MCF 10A (cell line): ENCODE measurements at regions of chr6 and their contacts with region 1.

Region 1: GRCh38 chr6:37018198-37019064 is 13.0 kb downstream of the FGD2 start:
- DNase-seq: peak; percentile 87
- H3K4me3 Mint-ChIP-seq: no peak overlapping the region
- H3K27ac Mint-ChIP-seq: no peak overlapping the region
- H3K4me1 Mint-ChIP-seq: peaks cover 26% of the 10 kb centered on the region
- H3K27me3 Mint-ChIP-seq: no peaks in the 10 kb centered on the region
- CTCF ChIP-seq: peak; percentile 72

Region 2: DNA sequence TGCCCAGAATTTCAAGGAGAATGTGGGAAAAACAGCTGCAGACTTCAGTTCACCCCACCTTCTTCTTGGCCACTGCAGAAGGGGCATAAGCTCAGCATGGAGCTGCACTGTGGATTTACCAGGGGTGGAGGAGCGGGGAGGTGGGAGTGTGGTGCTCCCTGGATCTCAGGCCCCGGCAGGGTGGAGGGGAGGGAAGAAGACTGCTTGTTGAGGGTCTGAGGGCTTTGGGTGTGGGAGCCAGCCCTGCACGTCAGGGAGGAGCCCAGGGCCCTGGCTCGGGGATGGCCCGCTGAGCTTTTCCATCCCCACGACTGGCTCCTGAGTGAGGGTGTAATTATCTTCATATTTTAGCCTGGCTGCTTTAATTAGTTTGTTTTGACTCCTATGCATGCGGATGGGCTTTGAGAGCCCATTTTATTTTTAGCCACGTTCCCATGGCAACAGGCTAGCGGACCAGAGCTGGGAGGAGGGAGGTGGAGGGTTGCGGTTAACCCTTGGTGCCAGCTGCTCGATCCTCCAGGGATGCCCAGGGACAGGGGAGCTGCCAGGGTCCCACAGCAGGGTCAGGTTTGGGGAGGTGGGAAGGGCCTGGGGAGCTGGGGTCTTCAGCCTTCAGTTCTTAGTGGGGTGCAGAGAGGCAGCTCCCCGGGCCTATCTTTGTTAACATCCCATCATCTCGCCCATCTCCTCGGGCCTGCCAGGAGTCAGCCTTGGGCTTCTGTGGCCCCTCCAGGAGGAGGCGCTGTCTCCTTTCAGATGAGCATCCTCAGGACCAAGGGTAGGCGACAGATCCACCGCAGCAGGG is 252.6 kb before region 1 on chr6:
- CTCF ChIA-PET with region 1: interaction called, 42 read pairs
- POLR2A ChIA-PET with region 1: no interaction called
- intact Hi-C with region 1: loop called (anchors 1 kb)
- DNase-seq: peak; percentile 83
- H3K4me3 Mint-ChIP-seq: no peak overlapping the region
- H3K27ac Mint-ChIP-seq: no peak overlapping the region
- H3K4me1 Mint-ChIP-seq: peaks cover 17% of the 10 kb centered on the region
- H3K27me3 Mint-ChIP-seq: no peaks in the 10 kb centered on the region
- CTCF ChIP-seq: peak; percentile 84

Region 3: DNA sequence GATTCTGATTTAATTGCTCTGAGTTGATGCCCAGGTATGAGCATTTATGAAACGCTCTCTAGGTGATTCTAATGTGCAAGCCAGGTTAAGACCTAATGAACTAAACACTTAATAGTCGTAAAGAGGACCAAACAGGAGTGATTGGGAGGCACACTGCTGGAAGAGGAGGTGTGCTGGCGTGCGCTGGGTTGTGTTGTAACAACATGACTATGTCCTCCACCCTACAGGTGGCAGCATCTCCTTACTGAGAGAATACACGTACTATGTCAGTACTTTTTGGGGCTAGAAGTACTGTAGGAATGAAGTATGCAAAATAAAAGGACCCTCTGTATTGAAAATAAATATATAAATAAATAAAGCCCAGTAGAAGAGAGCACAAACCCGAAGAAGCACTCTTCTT is 120.8 kb before region 1 on chr6:
- CTCF ChIA-PET with region 1: interaction called, 10 read pairs
- POLR2A ChIA-PET with region 1: interaction called, 4 read pairs
- intact Hi-C with region 1: no loop called
- DNase-seq: peak; percentile 25
- H3K4me3 Mint-ChIP-seq: no peak overlapping the region
- H3K27ac Mint-ChIP-seq: no peak overlapping the region
- H3K4me1 Mint-ChIP-seq: peaks cover 8% of the 10 kb centered on the region
- H3K27me3 Mint-ChIP-seq: no peaks in the 10 kb centered on the region
- CTCF ChIP-seq: no peak

Region 4: DNA sequence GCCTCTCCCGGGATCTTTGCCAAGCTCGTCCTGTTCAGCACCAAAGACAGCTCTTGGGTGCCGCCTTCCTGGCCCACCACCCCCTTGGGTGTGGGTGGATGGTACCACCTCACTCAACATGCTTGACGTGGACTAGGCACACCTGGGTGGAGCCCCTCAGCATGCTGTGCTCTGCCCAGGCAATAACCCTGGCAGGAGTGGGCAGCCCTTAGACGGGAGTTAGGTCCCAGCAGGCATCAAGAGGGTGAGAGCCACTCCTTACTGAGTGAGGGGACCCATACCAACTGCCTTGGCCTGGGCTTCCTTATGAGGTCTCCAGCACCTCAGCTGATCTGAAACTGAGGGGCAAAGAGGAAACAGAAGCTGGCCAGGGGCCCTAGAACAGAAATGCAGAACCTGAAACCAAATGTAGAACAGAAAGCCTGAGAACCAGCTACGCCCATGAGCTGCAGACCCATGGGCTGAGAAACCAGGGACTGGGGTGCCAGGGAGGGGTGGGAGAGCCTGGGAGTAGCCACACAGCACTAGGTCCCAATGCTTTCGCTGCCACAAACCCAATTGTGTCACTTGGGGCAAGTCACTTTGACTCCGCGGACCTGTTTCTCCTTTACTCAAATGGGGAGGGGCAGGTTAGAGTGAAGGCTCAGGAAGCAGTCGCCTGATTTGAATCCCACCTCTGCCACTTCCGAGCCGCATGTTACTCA is 10.9 kb before region 1 on chr6:
- CTCF ChIA-PET with region 1: interaction called, 19 read pairs
- POLR2A ChIA-PET with region 1: interaction called, 3 read pairs
- intact Hi-C with region 1: no loop called
- DNase-seq: no peak
- H3K4me3 Mint-ChIP-seq: no peak overlapping the region
- H3K27ac Mint-ChIP-seq: no peak overlapping the region
- H3K4me1 Mint-ChIP-seq: no peaks in the 10 kb centered on the region
- H3K27me3 Mint-ChIP-seq: peaks cover 3% of the 10 kb centered on the region
- CTCF ChIP-seq: no peak

Region 5: GRCh38 chr6:37169496-37170272 is 151.3 kb after region 1 on chr6 and contains the start of gene PIM1:
- CTCF ChIA-PET with region 1: interaction called, 359 read pairs
- POLR2A ChIA-PET with region 1: interaction called, 117 read pairs
- intact Hi-C with region 1: loop called (anchors 1 kb)
- DNase-seq: peak; percentile 96
- H3K4me3 Mint-ChIP-seq: peak within 1 kb of the TSS; percentile 81
- H3K27ac Mint-ChIP-seq: peak within 1 kb of the TSS; percentile 93
- H3K4me1 Mint-ChIP-seq: peaks cover 10% of the 10 kb centered on the region
- H3K27me3 Mint-ChIP-seq: no peaks in the 10 kb centered on the region
- CTCF ChIP-seq: no peak
- total RNA-seq, gene PIM1: 6.0 and 6.2 TPM in 2 replicates

Region 6: DNA sequence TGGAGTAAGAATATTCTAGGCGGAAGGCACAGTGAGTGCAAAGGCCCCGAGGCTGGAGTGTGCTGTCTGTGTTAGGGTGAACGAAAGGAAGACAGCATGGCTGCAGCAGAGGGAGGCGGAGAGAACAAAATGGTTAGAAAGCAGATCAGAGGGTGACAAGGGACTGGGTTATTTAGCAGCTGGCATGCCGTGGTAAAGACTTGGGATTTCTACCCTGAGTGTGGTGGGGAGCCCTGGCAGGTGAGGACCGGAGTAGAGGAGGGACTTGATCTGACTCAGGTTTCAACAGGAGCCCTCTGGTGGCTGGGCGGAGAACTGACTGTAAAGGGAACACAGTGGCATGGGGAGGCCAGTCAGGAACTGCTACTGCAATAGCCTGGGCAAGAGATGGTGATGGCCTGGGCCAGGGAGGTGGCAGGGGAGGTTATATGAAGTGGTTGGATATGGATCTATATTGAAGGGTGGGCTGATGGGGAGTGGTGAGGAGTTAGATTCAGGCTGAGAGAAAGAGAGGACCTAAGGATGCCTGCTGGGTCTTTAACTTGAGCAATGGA is 189.5 kb after region 1 on chr6:
- CTCF ChIA-PET with region 1: interaction called, 228 read pairs
- POLR2A ChIA-PET with region 1: interaction called, 5 read pairs
- intact Hi-C with region 1: loop called (anchors 1 kb)
- DNase-seq: peak; percentile 87
- H3K4me3 Mint-ChIP-seq: no peak overlapping the region
- H3K27ac Mint-ChIP-seq: no peak overlapping the region
- H3K4me1 Mint-ChIP-seq: peaks cover 7% of the 10 kb centered on the region
- H3K27me3 Mint-ChIP-seq: no peaks in the 10 kb centered on the region
- CTCF ChIP-seq: peak; percentile 60

Region 7: GRCh38 chr6:37525460-37526357 is 507.3 kb after region 1 on chr6:
- CTCF ChIA-PET with region 1: no interaction called
- POLR2A ChIA-PET with region 1: no interaction called
- intact Hi-C with region 1: no loop called
- DNase-seq: peak; percentile 38
- H3K4me3 Mint-ChIP-seq: no peak overlapping the region
- H3K27ac Mint-ChIP-seq: no peak overlapping the region
- H3K4me1 Mint-ChIP-seq: peaks cover 18% of the 10 kb centered on the region
- H3K27me3 Mint-ChIP-seq: peaks cover 16% of the 10 kb centered on the region
- CTCF ChIP-seq: no peak